HEK293 (cell line): ENCODE measurements at regions of chr10 and their contacts with region 1.

Region 1: GRCh38 chr10:92667078-92667477 is 22.7 kb upstream of the HHEX start:
- H3K4me3 ChIP-seq: no peak overlapping the region
- H3K27ac ChIP-seq: no peak overlapping the region
- H3K4me1 ChIP-seq: no peaks in the 10 kb centered on the region
- CTCF ChIP-seq: no peak

Region 2: DNA sequence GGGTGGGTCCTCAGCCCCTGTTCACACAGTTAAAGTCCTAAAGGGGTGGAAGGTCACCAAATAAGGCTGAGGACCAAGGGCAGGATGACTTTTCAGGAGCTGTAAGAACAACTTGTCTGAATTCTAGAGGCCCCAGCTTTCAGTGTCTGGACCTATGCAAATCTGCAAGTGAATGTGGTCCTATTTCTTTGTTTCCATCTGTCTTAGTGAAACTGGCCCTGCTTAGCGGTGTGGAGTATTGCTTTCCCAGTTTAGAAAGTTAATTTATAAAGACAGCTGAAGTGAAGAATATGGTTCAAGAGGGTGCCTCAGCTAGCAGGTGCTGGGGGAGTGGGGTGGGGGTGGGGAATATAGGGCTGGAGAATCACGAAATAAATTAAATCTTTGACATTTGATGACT is 62.8 kb after region 1 on chr10:
- CTCF ChIA-PET with region 1: no interaction called
- POLR2A ChIA-PET with region 1: interaction called, 10 read pairs
- H3K4me3 ChIP-seq: no peak overlapping the region
- H3K27ac ChIP-seq: no peak overlapping the region
- H3K4me1 ChIP-seq: 0 out of 2 replicates have a peak, but pooled peaks cover 3% of the 10 kb centered on the region
- CTCF ChIP-seq: no peak